ENCODE measurements at regions of chr11 and their contacts with region 1.

Region 1: GRCh38 chr11:92886243-92886905 is 83.1 kb upstream of the MTNR1B start:
- DNase-seq: peak; percentile 3
- ATAC-seq: peak; percentile 91
- H3K4me3 ChIP-seq: no peak overlapping the region
- H3K27ac ChIP-seq: no peak overlapping the region
- H3K4me1 ChIP-seq: no peaks in the 10 kb centered on the region
- H3K27me3 ChIP-seq: peaks cover 0 to 2% of the 10 kb centered on the region in 2 experiments; a peak in 2 of 4 replicates
- CTCF ChIP-seq: peak; percentile 49 to 77 (median 66); a peak in 5 of 6 replicates
- EP300 ChIP-seq: no peak
- POLR2A ChIP-seq: no peak
- RAD21 ChIP-seq: peak; percentile 90

Region 2: DNA sequence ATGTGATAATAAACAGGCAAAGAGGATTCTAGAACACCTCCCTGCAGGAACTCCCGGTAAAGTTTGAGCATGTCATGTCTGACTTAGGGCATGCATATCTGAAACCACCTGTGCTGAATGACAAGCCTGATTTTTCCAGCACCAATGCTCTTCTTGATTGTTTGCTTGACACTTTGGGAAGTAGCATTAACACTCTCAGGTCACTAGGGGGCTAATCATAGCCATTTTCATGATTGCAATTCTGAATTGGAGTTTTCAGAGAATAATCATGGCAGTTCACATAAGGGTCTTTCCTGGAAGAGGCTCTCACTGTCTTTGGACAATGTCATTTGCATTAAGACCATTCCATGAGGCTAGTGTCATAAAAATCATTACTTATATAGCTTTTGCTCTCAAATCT is 151.3 kb before region 1 on chr11:
- CTCF ChIA-PET with region 1: interaction called, 3 read pairs
- POLR2A ChIA-PET with region 1: no interaction called
- RAD21 ChIA-PET with region 1: no interaction called
- SMC1A ChIA-PET with region 1: no interaction called
- in situ Hi-C with region 1: no loop called
- intact Hi-C with region 1: loop called (anchors 1 kb)
- DNase-seq: no peak
- ATAC-seq: no peak
- H3K4me3 ChIP-seq: no peak overlapping the region
- H3K27ac ChIP-seq: no peak overlapping the region
- H3K4me1 ChIP-seq: no peaks in the 10 kb centered on the region
- H3K27me3 ChIP-seq: no peaks in the 10 kb centered on the region
- CTCF ChIP-seq: peak in 1 of 3 experiments; percentile 33; a peak in 3 of 6 replicates
- EP300 ChIP-seq: no peak
- POLR2A ChIP-seq: no peak
- RAD21 ChIP-seq: no peak

Region 3: DNA sequence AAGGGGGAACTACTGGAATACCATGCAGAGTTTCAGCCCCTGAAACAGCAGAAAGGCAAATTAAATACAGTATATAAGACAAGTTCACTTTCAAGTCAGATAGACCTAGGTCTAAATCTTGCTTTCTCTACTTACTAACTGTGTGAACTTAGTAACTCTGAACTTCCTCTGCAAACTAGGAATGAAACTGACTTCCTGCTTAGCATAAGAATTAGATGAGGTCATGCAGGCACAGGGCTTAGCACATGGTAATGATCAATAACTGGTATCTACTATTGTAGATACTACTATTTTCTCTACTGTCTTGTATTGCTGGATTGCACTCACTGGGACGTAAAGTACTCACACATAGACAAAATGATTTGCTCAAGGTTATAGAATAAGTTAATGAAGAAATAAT is 31.6 kb after region 1 on chr11:
- CTCF ChIA-PET with region 1: no interaction called
- POLR2A ChIA-PET with region 1: no interaction called
- RAD21 ChIA-PET with region 1: no interaction called
- SMC1A ChIA-PET with region 1: no interaction called
- in situ Hi-C with region 1: no loop called
- intact Hi-C with region 1: no loop called
- DNase-seq: no peak
- ATAC-seq: no peak
- H3K4me3 ChIP-seq: no peak overlapping the region
- H3K27ac ChIP-seq: no peak overlapping the region
- H3K4me1 ChIP-seq: no peaks in the 10 kb centered on the region
- H3K27me3 ChIP-seq: no peaks in the 10 kb centered on the region
- CTCF ChIP-seq: no peak
- EP300 ChIP-seq: no peak
- POLR2A ChIP-seq: no peak
- RAD21 ChIP-seq: no peak

Measured in GM12878 (cell line).